A673 (cell line): ENCODE measurements at regions of chr11 and their contacts with region 1.

Region 1: DNA sequence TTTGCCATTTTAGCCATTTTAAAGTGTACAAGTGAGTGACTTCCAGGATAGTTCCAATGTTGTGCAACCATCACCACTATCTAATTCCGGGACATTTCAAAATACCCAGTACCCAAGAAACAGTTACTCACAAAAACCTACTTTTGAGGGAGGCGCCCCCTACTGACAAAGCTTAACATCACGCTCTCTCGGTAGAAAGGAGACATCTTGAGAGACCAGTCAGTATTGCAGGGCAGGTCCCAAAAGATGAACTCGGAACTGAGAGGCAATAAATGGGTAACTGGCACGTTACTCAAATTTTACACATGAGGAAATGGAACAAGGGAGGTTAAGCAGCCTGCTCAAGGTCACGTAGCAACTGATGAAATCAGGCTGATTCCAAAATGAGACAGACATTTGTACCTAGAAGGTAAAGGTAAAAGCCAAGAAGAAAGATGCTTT is 50.0 kb upstream of the POU2AF1 start:
- DNase-seq: peak; percentile 90
- H3K4me3 ChIP-seq: no peak overlapping the region
- H3K27ac ChIP-seq: no peak overlapping the region
- H3K4me1 ChIP-seq: peaks cover 25% of the 10 kb centered on the region
- H3K27me3 ChIP-seq: no peaks in the 10 kb centered on the region
- CTCF ChIP-seq: peak; percentile 99

Region 2: GRCh38 chr11:110948112-110948511 is 481.0 kb before region 1 on chr11:
- CTCF ChIA-PET with region 1: no interaction called
- POLR2A ChIA-PET with region 1: no interaction called
- intact Hi-C with region 1: no loop called
- DNase-seq: no peak
- H3K4me3 ChIP-seq: no peak overlapping the region
- H3K27ac ChIP-seq: no peak overlapping the region
- H3K4me1 ChIP-seq: no peaks in the 10 kb centered on the region
- H3K27me3 ChIP-seq: no peaks in the 10 kb centered on the region
- CTCF ChIP-seq: no peak

Region 3: DNA sequence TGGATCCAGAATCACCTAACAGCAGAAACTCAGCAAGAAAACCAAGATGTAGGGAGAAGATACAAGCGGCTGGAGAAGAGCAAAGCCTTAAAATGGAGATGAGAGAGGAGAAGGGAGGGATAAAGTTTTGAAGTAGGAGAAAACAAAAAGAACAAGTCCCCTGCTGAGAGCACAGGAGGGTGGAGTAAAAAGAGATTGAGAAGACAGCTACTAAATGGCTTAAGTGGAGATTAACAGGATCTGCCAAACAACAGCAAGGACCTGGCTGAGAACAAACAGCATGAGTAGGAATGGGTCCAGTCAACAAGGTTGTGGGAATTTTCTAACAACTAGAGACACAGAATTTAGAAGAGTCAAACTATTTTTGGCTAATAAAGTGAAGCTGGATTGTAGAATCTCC is 65.0 kb after region 1 on chr11:
- CTCF ChIA-PET with region 1: interaction called, 12 read pairs
- POLR2A ChIA-PET with region 1: no interaction called
- intact Hi-C with region 1: no loop called
- DNase-seq: peak; percentile 78
- H3K4me3 ChIP-seq: no peak overlapping the region
- H3K27ac ChIP-seq: no peak overlapping the region
- H3K4me1 ChIP-seq: peaks cover 7% of the 10 kb centered on the region
- H3K27me3 ChIP-seq: no peaks in the 10 kb centered on the region
- CTCF ChIP-seq: no peak